Kidney (tissue), 22 donors: ENCODE measurements at regions of chr9 and their contacts with region 1.

Region 1: DNA sequence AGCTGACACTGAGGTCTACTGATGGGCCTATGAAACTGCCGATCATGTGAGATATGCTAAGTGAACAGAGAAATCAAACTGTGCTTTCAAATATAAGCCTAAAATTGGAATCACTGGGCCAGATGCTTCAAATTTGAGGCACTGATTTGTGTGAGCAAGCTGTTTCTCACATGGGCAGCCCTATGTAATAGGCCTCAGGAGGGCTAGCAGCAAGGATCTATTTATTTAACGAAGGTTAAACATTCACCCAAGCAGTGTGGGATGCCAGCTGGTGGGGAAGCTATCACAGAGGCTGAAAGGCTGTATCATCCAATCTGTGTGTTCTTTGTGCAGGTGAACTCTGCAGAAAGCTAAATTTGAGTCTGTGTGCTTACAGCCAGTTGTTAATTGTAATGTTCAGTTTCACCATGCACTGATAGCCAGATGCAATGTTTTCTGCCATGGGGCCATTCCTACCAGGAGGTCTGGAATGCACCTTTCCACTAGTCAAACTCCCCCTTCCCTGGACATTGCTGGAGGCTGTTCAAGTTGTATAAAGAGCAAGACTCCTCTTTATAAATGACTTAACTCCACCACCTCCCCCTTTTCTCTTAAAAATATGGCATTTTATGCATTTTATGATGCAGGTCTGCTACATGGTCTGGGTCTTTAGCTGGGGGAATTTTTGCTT is 228.9 kb downstream of the SH3GL2 start:
- DNase-seq: peak in 3 of 5 donors; percentile 15 to 29 (median 25)
- H3K4me3 ChIP-seq: no peak overlapping the region
- H3K27ac ChIP-seq: no peak overlapping the region
- H3K4me1 ChIP-seq: no peaks in the 10 kb centered on the region
- H3K27me3 ChIP-seq: no peaks in the 10 kb centered on the region
- CTCF ChIP-seq: no peak

Region 2: DNA sequence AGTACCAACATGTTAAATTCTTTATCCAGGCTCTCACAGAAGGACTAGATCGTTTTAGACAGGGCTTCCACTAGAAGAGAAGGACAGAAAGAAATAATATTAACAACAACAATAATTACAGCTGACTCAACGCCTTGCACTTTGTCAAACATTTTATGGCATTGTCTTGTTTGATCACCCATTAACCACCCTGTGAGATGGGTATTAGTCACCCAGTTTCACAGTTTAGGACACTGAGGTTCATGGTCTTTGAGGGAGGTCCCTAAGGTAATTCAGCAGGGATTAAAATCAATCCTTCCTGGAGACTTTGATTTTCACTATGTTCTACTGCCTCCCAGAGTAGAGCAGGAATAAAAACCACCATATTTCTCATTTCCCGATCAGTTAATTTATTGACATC is 885.9 kb before region 1 on chr9:
- intact Hi-C with region 1: no loop called
- DNase-seq: no peak
- H3K4me3 ChIP-seq: no peak overlapping the region
- H3K27ac ChIP-seq: no peak overlapping the region
- H3K4me1 ChIP-seq: no peaks in the 10 kb centered on the region
- H3K27me3 ChIP-seq: no peaks in the 10 kb centered on the region
- CTCF ChIP-seq: no peak

Region 3: GRCh38 chr9:17531642-17532254 is 276.0 kb before region 1 on chr9:
- intact Hi-C with region 1: loop called (anchors 5 kb)
- DNase-seq: peak in 4 of 5 donors; percentile 37 to 75 (median 64)
- H3K4me3 ChIP-seq: peak overlapping the region in 1 of 3 donors; percentile 41
- H3K27ac ChIP-seq: no peak overlapping the region
- H3K4me1 ChIP-seq: no peaks in the 10 kb centered on the region
- H3K27me3 ChIP-seq: no peaks in the 10 kb centered on the region
- CTCF ChIP-seq: peak; percentile 73